ENCODE measurements at regions of chr6 and their contacts with region 1.

Region 1: DNA sequence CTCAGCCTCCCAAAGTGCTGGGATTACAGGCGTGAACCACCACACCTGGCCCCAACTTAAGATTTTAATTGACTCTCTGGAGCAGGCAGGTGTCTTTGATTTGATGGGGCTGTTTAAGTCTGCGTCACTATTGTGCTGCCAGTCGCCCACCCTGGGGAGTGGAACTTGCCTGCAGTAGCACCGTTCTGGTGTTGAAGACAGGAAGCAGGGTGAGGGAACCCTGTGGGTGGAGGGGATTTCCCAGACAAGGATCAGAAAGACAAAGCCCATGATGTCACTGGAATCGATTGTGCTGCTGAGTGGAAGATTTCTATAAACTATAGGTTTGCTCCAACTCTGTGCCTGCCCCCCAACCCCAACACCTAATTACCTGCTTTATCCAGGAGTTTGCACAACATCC is 11.0 kb downstream of the ALDH8A1 start:
- DNase-seq: no peak
- ATAC-seq: no peak
- H3K4me3 ChIP-seq: no peak overlapping the region
- H3K27ac ChIP-seq: no peak overlapping the region
- H3K4me1 ChIP-seq: peaks cover 6% of the 10 kb centered on the region
- H3K27me3 ChIP-seq: no peaks in the 10 kb centered on the region
- CTCF ChIP-seq: no peak
- EP300 ChIP-seq: no peak
- POLR2A ChIP-seq: no peak
- RAD21 ChIP-seq: no peak

Region 2: DNA sequence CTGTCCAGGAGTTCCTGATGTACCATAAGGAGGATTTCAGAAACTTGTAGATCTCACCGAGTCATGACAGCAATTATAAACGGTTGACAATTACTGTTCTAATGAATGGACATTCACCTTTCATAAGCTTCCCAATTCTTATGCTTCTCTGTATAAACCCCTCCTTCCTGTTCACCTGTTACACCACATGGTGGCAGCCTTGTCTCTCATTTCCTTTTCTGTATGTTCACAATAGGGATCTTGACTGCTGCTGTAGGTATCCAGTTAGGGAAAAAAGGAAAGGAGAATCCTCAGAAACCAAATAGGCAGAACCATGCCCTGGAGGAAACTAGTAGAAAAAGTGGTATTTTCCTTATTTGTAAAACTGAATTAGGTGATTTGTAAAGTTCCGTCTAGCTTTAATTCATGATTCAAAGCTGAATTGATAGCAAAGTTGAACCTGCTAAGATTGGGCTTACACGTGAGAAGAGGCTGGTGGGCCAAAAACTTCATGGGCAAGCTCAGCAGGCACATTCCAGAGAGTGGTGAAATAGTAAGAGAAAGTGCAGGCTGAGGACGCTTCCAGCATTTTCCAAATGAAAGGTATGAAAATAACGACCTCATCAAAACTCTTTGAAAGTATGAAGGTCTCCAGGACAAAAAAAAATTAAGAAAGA is 1014.8 kb before region 1 on chr6:
- CTCF ChIA-PET with region 1: no interaction called
- POLR2A ChIA-PET with region 1: no interaction called
- in situ Hi-C with region 1: no loop called
- intact Hi-C with region 1: loop called (anchors 5 kb)
- DNase-seq: peak; percentile 81
- ATAC-seq: peak; percentile 98
- H3K4me3 ChIP-seq: no peak overlapping the region
- H3K27ac ChIP-seq: no peak overlapping the region
- H3K4me1 ChIP-seq: no peaks in the 10 kb centered on the region
- H3K27me3 ChIP-seq: no peaks in the 10 kb centered on the region
- CTCF ChIP-seq: peak; percentile 93
- EP300 ChIP-seq: no peak
- POLR2A ChIP-seq: no peak
- RAD21 ChIP-seq: peak; percentile 88

Region 3: DNA sequence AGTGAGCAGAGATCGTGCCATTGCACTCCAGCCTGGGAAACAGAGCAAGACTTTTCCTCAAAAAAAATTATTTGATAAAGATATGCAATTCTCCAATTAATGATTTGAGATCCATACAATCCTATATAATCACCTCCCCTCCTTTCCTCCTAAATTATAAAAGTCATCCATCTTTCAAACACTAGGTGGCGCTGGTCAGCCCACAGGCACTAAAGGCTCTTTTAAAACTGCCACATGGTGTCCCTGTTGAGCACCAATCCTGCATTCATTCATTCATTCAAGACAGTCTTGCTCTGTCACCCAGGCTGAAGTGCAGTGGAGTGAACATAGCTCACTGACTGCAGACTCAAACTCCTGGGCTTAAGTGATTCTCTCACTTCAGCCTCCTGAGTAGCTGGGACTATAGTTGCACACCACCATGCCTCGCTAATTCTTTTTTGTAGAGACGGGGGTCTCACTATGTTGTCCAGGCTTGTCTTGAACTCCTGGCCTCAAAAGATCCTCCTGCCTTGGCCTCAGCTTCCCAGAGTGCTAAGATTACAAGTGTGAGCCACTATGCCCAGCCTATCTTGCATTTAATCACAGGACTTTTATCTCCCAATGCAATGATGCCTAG is 827.7 kb before region 1 on chr6:
- CTCF ChIA-PET with region 1: interaction called, 19 read pairs
- POLR2A ChIA-PET with region 1: no interaction called
- in situ Hi-C with region 1: no loop called
- intact Hi-C with region 1: loop called (anchors 1 kb)
- DNase-seq: peak; percentile 82
- ATAC-seq: peak; percentile 57
- H3K4me3 ChIP-seq: no peak overlapping the region
- H3K27ac ChIP-seq: no peak overlapping the region
- H3K4me1 ChIP-seq: no peaks in the 10 kb centered on the region
- H3K27me3 ChIP-seq: peaks cover 0 to 11% of the 10 kb centered on the region in 2 experiments; a peak in 1 of 5 replicates
- CTCF ChIP-seq: peak; percentile 88
- EP300 ChIP-seq: no peak
- POLR2A ChIP-seq: no peak
- RAD21 ChIP-seq: peak; percentile 83

Region 4: DNA sequence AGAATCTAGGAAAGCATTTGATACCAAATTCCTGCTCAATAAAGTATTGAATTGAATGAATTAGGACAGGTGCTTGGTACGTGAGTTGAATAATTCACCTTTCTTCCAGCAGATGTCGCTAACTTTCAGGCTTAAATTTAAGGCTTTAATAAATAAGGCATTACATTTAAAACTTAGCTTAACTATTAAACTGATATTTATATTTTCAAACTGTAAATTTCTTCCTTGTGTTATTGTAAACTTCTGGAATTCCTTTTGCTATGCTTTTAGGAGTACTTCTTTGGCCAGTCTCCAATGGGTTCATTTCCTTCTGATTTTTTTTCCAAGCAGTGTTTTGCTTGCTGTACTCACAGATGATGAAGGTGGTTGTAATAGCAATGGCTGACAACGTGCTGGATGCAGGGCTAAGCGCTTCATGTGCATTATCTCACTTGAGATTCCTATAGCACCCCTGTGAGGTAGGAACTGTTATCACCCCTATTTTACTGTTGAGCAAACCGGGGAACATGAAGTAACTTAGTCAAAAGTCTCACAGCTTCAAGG is 815.2 kb before region 1 on chr6:
- CTCF ChIA-PET with region 1: interaction called, 15 read pairs
- POLR2A ChIA-PET with region 1: no interaction called
- in situ Hi-C with region 1: loop called (anchors 10 kb)
- intact Hi-C with region 1: loop called (anchors 2 kb)
- DNase-seq: peak; percentile 53
- ATAC-seq: peak; percentile 83
- H3K4me3 ChIP-seq: no peak overlapping the region
- H3K27ac ChIP-seq: no peak overlapping the region
- H3K4me1 ChIP-seq: no peaks in the 10 kb centered on the region
- H3K27me3 ChIP-seq: no peaks in the 10 kb centered on the region
- CTCF ChIP-seq: peak; percentile 59
- EP300 ChIP-seq: no peak
- POLR2A ChIP-seq: no peak
- RAD21 ChIP-seq: no peak

Region 5: DNA sequence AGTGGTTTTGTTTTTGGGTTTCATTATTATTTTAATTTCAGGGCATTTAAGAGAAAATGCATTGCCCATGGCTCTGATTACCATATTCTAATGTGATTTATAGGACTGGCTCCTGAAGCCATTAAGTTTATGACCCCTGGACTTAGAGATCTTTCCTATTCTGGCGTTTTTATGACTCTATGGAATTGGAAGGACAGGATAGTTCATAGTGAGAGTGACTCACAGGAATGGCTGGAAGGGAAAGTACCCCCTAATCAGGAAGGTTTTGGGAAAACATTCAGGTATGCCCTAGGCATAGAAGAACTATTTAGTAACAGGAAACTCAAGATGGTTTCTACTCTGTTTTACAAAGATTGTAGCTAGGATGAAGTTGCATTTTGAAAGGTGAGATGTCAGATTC is 777.9 kb before region 1 on chr6:
- CTCF ChIA-PET with region 1: interaction called, 13 read pairs
- POLR2A ChIA-PET with region 1: no interaction called
- in situ Hi-C with region 1: no loop called
- intact Hi-C with region 1: loop called (anchors 2 kb)
- DNase-seq: no peak
- ATAC-seq: no peak
- H3K4me3 ChIP-seq: no peak overlapping the region
- H3K27ac ChIP-seq: no peak overlapping the region
- H3K4me1 ChIP-seq: no peaks in the 10 kb centered on the region
- H3K27me3 ChIP-seq: no peaks in the 10 kb centered on the region
- CTCF ChIP-seq: no peak
- EP300 ChIP-seq: no peak
- POLR2A ChIP-seq: no peak
- RAD21 ChIP-seq: no peak

Region 6: DNA sequence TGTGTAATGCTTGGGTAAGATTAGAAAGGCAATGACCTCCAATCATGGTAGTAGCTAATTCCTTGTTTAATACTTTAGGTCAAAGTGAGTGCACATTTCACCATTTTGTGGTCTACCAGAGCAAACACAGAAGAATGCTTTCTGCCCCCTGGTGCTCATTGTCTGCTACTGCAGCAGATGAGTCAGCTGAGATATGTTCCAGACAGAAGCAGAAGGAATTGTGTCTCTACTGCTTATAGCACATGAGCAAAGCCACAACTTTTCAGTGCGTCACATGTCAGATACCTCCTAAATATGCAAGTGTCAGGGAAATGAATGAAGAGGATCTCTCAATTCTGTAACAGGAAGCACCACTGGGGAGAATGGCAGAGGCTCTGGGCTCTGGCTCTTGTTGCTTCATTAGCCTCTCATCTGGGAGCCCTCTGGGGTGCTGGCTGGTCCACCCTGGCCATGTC is 297.9 kb before region 1 on chr6:
- CTCF ChIA-PET with region 1: no interaction called
- POLR2A ChIA-PET with region 1: no interaction called
- in situ Hi-C with region 1: no loop called
- intact Hi-C with region 1: loop called (anchors 2 kb)
- DNase-seq: peak; percentile 79
- ATAC-seq: peak; percentile 96
- H3K4me3 ChIP-seq: no peak overlapping the region
- H3K27ac ChIP-seq: no peak overlapping the region
- H3K4me1 ChIP-seq: 0 out of 2 replicates have a peak, but pooled peaks cover 4% of the 10 kb centered on the region
- H3K27me3 ChIP-seq: no peaks in the 10 kb centered on the region; a peak in 1 of 5 replicates
- CTCF ChIP-seq: peak; percentile 94
- EP300 ChIP-seq: no peak
- POLR2A ChIP-seq: no peak
- RAD21 ChIP-seq: peak; percentile 85; the same call in 1 of the 2 replicates